Adrenal gland (tissue), 19 donors: ENCODE measurements at regions of chr4 and their contacts with region 1.

Region 1: DNA sequence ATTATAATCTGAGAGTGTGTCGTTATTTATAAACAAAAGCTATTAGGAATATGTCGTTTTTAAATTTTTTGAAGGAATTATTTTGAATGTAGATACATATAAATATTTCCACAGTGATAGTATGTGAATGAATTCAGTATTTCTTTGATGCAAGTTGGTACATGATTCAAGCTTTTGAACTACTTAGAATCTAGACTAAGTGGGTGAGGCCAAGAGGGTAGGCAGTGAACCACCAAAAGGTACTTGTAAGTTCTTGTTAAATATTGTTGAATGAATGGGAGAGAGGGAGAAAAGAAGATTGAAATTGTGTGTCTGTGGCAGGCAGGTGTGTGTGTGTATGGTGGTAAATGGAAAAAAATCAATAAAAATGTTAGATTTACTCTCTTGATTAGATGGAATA is 69.6 kb downstream of the ARFIP1 start:
- DNase-seq: no peak
- H3K4me3 ChIP-seq: no peak overlapping the region
- H3K27ac ChIP-seq: no peak overlapping the region
- H3K4me1 ChIP-seq: peaks cover 0 to 9% of the 10 kb centered on the region in 2 donors
- H3K27me3 ChIP-seq: no peaks in the 10 kb centered on the region
- CTCF ChIP-seq: no peak
- POLR2A ChIP-seq: no peak

Region 2: DNA sequence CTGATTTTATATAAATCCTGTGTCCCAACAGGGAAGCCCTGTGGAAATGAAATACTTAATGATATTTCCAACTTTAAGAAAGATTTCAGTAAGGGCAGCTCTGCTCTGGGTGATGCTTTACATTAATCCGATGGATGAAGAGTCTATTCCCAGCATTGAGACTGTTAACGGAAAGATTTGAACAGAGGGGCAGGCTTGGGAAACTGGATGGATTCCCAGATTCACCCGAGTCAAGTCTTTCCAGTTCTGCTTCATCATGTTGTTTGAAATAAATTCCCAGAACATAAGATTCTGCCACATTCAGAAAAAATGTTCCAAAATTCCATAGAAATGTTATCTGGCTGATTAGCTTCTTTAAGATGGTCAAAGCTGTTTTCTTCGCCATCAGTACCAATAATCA is 559.4 kb before region 1 on chr4:
- intact Hi-C with region 1: no loop called
- DNase-seq: no peak
- H3K4me3 ChIP-seq: no peak overlapping the region
- H3K27ac ChIP-seq: no peak overlapping the region
- H3K4me1 ChIP-seq: no peaks in the 10 kb centered on the region
- H3K27me3 ChIP-seq: no peaks in the 10 kb centered on the region
- CTCF ChIP-seq: no peak
- POLR2A ChIP-seq: no peak

Region 3: DNA sequence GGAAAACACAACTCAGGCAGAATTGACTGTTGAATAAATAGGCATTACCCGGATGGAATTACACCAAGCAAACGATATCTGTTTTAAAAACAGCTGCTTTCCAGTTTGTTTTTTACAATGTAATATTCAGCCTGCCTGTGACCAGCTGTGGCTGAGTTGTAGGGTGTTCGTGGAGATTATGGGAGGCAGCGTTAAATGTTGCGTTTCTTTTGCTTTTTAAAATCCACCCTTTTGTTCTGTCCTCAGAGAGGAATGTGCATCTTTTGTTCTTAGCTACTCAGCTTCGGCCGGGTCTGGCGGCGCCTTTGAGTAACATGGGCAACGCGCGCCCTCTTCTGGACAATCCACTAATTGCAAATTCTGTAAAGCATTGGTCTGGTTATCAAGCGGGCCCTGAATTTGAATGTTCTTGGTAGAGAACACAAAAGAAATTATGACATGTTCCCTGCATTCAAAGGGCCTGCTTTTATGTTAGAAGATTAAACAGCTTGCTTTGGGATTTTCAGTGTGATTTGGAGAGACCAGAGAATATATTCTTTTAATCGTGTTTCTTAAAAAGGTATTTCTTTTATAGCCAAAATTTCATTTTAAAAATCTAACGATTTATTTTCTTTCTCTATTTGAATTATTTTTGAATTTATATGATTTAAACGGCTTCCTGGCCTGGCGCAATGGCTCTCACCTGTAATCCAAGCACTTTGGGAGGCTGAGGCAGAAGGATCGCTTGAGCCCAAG is 278.6 kb after region 1 on chr4:
- intact Hi-C with region 1: loop called in 1 of 2 experiments (anchors 5 kb)
- DNase-seq: peak; percentile 79 to 96 (median 92)
- H3K4me3 ChIP-seq: no peak overlapping the region
- H3K27ac ChIP-seq: no peak overlapping the region
- H3K4me1 ChIP-seq: no peaks in the 10 kb centered on the region
- H3K27me3 ChIP-seq: no peaks in the 10 kb centered on the region
- CTCF ChIP-seq: peak; percentile 76 to 87 (median 86)
- POLR2A ChIP-seq: no peak